Activated naive CD4-positive, alpha-beta T cell treated with anti-CD3 and anti-CD28 coated beads for 36 hours (primary cell): ENCODE measurements at regions of chr5 and their contacts with region 1.

Region 1: GRCh38 chr5:58886315-58887207 is 303.7 kb downstream of the RAB3C start:
- DNase-seq: peak; percentile 78
- H3K4me3 Mint-ChIP-seq: no peak overlapping the region
- H3K27ac Mint-ChIP-seq: peak overlapping the region; percentile 76
- H3K4me1 Mint-ChIP-seq: peaks cover 34% of the 10 kb centered on the region
- H3K27me3 Mint-ChIP-seq: peaks cover 5% of the 10 kb centered on the region

Region 2: GRCh38 chr5:58898538-58898937 is 12.0 kb after region 1 on chr5:
- CTCF ChIA-PET with region 1: interaction called, 14 read pairs
- intact Hi-C with region 1: no loop called
- DNase-seq: no peak
- H3K4me3 Mint-ChIP-seq: no peak overlapping the region
- H3K27ac Mint-ChIP-seq: no peak overlapping the region
- H3K4me1 Mint-ChIP-seq: no peaks in the 10 kb centered on the region
- H3K27me3 Mint-ChIP-seq: no peaks in the 10 kb centered on the region

Region 3: DNA sequence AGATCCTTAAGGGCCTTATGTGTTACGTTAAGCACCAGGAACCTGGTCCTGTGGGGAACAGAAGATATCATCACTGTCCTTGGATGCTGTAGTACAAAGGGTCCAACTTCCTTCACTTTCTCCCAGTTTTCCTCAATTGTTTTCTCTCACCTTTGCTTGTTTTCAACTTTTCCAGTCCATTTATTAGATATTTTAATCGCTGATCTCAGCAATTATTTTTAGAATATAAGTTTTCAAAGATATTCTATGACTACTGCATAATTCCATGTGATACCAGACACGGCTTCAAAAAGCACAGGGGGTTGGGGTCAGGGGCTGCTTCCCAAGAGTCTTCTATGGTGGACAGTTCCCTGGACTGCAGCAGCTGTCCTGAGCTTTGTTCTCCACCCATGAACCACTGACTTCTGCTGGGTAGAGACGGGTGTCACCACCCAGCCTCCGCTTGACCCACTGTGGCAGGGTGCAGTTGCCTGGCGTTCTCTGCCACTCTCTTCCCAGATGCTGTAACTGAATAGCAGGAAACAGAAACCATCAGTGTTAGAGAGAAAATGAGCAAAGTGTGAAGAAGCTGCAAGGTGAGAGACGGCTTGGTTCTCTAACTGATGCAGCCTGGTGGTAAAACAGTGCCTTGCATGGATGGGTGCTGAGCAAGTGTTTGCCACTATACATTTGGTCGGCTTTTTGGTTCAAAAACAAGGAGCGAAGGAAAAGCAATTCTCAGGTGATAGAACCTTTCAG is 79.3 kb after region 1 on chr5:
- CTCF ChIA-PET with region 1: interaction called, 14 read pairs
- intact Hi-C with region 1: loop called (anchors 1 kb)
- DNase-seq: peak; percentile 13
- H3K4me3 Mint-ChIP-seq: no peak overlapping the region
- H3K27ac Mint-ChIP-seq: no peak overlapping the region
- H3K4me1 Mint-ChIP-seq: peaks cover 6% of the 10 kb centered on the region
- H3K27me3 Mint-ChIP-seq: no peaks in the 10 kb centered on the region

Region 4: GRCh38 chr5:59020611-59021285 is 134.2 kb after region 1 on chr5:
- CTCF ChIA-PET with region 1: interaction called, 6 read pairs
- intact Hi-C with region 1: loop called (anchors 1 kb)
- DNase-seq: peak; percentile 76
- H3K4me3 Mint-ChIP-seq: peak overlapping the region; percentile 42
- H3K27ac Mint-ChIP-seq: peak overlapping the region; percentile 89
- H3K4me1 Mint-ChIP-seq: peaks cover 57% of the 10 kb centered on the region
- H3K27me3 Mint-ChIP-seq: no peaks in the 10 kb centered on the region

Region 5: DNA sequence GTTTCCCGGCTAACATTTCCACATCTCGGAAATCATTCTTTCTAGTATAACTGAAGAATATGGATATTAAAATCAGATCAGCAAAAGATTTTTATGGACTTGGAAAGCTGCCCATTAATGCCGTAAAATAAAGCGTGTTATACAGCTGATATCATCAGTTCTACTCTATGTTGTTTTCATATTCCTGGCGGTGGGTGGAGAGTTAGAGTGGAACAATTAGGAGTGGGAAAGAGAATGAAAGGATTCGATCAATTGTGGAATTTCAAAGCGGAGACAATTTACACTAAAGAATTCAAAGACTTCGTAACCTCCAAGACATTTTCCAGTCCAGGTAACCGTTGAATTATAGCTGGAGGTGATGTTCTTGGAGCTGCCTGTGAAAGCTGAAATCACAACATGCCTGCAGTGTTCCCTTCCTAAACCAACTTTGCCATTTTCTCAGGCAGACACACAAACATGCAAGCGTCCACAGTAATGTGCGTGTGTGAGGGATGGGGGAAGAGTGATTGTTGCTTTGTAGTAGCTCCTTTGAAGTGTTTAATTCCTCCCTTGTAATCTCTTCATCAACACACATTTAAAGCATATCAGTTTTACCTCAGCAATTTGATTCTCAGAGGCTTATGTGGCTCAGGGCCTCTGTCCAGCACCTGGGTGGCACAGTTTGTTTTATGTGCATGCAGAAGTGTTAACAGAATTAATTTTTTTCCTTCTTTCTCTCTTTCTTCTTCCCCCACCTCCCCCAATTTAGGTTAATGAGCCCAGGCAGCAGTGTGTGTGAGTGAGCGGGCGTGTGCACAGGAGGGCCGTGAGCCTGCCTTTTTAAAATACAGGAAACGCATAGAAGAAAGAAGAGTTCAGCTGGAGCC is 240.4 kb after region 1 on chr5:
- CTCF ChIA-PET with region 1: interaction called, 8 read pairs
- intact Hi-C with region 1: loop called (anchors 1 kb)
- DNase-seq: no peak
- H3K4me3 Mint-ChIP-seq: no peak overlapping the region
- H3K27ac Mint-ChIP-seq: no peak overlapping the region
- H3K4me1 Mint-ChIP-seq: peaks cover 27% of the 10 kb centered on the region
- H3K27me3 Mint-ChIP-seq: no peaks in the 10 kb centered on the region

Region 6: GRCh38 chr5:59238126-59238902 is 351.8 kb after region 1 on chr5:
- CTCF ChIA-PET with region 1: no interaction called
- intact Hi-C with region 1: loop called (anchors 1 kb)
- DNase-seq: peak; percentile 35
- H3K4me3 Mint-ChIP-seq: no peak overlapping the region
- H3K27ac Mint-ChIP-seq: no peak overlapping the region
- H3K4me1 Mint-ChIP-seq: peaks cover 22% of the 10 kb centered on the region
- H3K27me3 Mint-ChIP-seq: peaks cover 38% of the 10 kb centered on the region

Region 7: GRCh38 chr5:59483971-59484472 is 597.5 kb after region 1 on chr5:
- CTCF ChIA-PET with region 1: no interaction called
- intact Hi-C with region 1: loop called (anchors 1 kb)
- DNase-seq: peak; percentile 25
- H3K4me3 Mint-ChIP-seq: no peak overlapping the region
- H3K27ac Mint-ChIP-seq: peak overlapping the region; percentile 17
- H3K4me1 Mint-ChIP-seq: peaks cover 19% of the 10 kb centered on the region
- H3K27me3 Mint-ChIP-seq: peaks cover 2% of the 10 kb centered on the region